Heart left ventricle (tissue), 16 donors: ENCODE measurements at regions of chr6 and their contacts with region 1.

Region 1: DNA sequence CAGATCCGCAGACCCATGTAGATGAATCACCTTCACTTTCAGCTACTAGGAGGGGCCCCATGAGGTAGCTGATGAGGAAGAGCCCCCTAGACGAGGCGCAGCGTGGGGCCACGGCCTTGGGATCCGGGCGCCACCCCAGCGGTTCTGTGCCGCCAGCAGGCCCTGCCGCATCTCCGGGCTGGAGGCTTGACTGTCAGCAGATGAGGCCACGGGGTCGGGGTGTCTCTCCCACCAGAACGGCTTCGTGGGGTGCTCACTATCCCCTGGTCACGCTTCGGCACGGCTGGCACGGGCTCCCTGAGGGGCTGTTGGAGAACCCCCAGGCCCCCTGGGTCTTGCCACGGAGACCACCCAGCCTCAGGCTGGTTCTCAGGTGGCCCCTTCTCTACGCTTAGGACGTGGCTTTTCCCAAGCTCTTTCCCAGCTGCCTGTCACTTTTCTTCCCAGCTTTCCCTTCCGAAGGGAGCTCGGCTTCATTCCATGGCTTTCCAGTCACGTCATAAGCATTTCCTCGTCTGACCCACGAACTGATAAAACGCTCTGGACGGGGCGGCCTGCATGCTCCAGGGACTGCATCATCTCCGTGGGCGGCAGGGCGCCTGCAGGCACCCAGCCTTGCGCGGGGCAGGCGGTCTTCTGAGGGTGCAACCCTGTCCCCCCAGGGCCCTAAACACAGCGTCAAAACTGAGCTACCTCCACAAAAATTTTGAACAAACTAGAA is 85.9 kb downstream of the THBS2 start:
- DNase-seq: peak; percentile 80 to 85 (median 83)
- ATAC-seq: peak; percentile 48 to 88 (median 80)
- H3K4me3 ChIP-seq: peak overlapping the region in 5 of 12 donors; percentile 3 to 26 (median 10)
- H3K27ac ChIP-seq: peak overlapping the region in 11 of 12 donors; percentile 11 to 94 (median 78)
- H3K4me1 ChIP-seq: peaks cover 0 to 31% (median 0%) of the 10 kb centered on the region in 12 donors
- H3K27me3 ChIP-seq: peaks cover 0 to 4% (median 0%) of the 10 kb centered on the region in 9 donors
- CTCF ChIP-seq: no peak
- POLR2A ChIP-seq: no peak

Region 2: GRCh38 chr6:168808232-168808631 is 359.5 kb before region 1 on chr6:
- intact Hi-C with region 1: no loop called
- DNase-seq: no peak
- ATAC-seq: no peak
- H3K4me3 ChIP-seq: no peak overlapping the region
- H3K27ac ChIP-seq: no peak overlapping the region
- H3K4me1 ChIP-seq: no peaks in the 10 kb centered on the region
- H3K27me3 ChIP-seq: peaks cover 0 to 5% (median 0%) of the 10 kb centered on the region in 9 donors
- CTCF ChIP-seq: no peak
- POLR2A ChIP-seq: no peak

Region 3: GRCh38 chr6:169092375-169092774 is 75.4 kb before region 1 on chr6:
- intact Hi-C with region 1: loop called in 1 of 10 experiments (anchors 5 kb)
- DNase-seq: no peak
- ATAC-seq: no peak
- H3K4me3 ChIP-seq: no peak overlapping the region
- H3K27ac ChIP-seq: no peak overlapping the region
- H3K4me1 ChIP-seq: peaks cover 0 to under 1% (median 0%) of the 10 kb centered on the region in 12 donors
- H3K27me3 ChIP-seq: peaks cover 0 to 1% (median 0%) of the 10 kb centered on the region in 9 donors
- CTCF ChIP-seq: no peak
- POLR2A ChIP-seq: no peak

Region 4: DNA sequence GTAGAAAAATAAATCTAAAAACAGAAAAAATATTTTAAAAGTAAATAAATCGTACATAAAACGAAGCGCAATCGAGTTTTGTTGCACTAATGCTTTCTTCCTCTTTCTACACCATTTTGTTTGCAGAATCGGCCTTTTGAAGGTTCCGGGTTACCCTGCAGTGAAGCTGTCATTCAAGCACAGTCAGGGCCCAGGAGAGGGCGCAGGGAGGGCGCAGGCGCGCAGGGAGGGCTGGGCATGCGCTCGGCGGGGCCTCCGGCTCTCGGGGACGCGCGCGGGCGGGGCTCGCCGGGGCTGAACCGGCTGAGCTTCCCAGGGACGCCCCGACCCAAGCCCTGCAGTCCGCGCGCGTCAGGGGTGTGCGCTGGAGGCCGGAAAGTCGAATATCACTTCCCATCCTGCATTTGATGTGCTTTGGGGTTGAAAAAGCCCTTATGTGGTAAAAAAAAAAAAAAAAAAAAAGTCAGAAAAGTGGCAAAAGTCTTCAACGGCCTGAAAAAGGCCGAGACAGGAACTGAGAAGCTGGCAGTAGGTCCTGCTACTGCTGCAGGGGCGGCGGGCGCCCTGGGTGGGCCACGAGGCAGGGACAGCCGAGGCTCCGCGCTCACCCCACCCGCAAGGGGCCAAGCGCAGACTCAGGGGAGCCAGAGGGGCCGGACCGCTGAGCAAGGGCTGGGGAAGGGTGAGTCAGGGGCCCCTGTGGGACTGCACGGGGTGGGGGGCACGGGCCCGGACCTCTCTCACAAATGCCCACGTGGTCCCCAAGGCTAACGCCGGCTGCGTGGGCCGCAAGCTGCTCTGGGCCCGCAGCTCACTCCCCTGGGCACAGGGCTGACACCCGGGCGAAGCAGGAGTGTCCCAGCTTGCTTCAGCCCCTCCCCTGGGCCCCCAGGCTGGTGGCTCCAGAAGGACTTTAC is 45.4 kb after region 1 on chr6:
- intact Hi-C with region 1: loop called in 1 of 10 experiments (anchors 2 kb)
- DNase-seq: peak; percentile 92 to 97 (median 95)
- ATAC-seq: peak; percentile 92 to 99 (median 98)
- H3K4me3 ChIP-seq: peak overlapping the region in 11 of 12 donors; percentile 30 to 59 (median 42)
- H3K27ac ChIP-seq: peak overlapping the region; percentile 72 to 97 (median 87)
- H3K4me1 ChIP-seq: peaks cover 0 to 31% (median 11%) of the 10 kb centered on the region in 12 donors
- H3K27me3 ChIP-seq: no peaks in the 10 kb centered on the region
- CTCF ChIP-seq: peak in 10 of 12 donors; percentile 36 to 73 (median 48)
- POLR2A ChIP-seq: peak in 1 of 2 donors; percentile 45